ENCODE measurements at regions of chr12 and their contacts with region 1.

Region 1: GRCh38 chr12:47812797-47813510 is 6.7 kb downstream of the HDAC7 start:
- DNase-seq: peak; percentile 94
- ATAC-seq: peak; percentile 72
- H3K4me3 ChIP-seq: peak overlapping the region; percentile 53 to 68 (median 61)
- H3K4me3 Mint-ChIP-seq: peak overlapping the region; percentile 85
- H3K27ac ChIP-seq: peak overlapping the region; percentile 96 to 98
- H3K27ac Mint-ChIP-seq: peak overlapping the region; percentile 96
- H3K4me1 ChIP-seq: peaks cover 91 to 97% of the 10 kb centered on the region in 2 donors
- H3K4me1 Mint-ChIP-seq: peaks cover 94% of the 10 kb centered on the region
- H3K27me3 ChIP-seq: no peaks in the 10 kb centered on the region
- H3K27me3 Mint-ChIP-seq: no peaks in the 10 kb centered on the region
- CTCF ChIP-seq: no peak

Region 2: GRCh38 chr12:47356129-47356700 is 456.7 kb before region 1 on chr12:
- CTCF ChIA-PET with region 1: no interaction called
- POLR2A ChIA-PET with region 1: no interaction called
- intact Hi-C with region 1: loop called (anchors 5 kb)
- DNase-seq: peak; percentile 93
- ATAC-seq: peak; percentile 77
- H3K4me3 ChIP-seq: peak overlapping the region in 1 of 5 experiments; percentile 31
- H3K4me3 Mint-ChIP-seq: peak overlapping the region; percentile 74
- H3K27ac ChIP-seq: peak overlapping the region; percentile 91 to 95
- H3K27ac Mint-ChIP-seq: peak overlapping the region; percentile 98
- H3K4me1 ChIP-seq: peaks cover 71 to 80% of the 10 kb centered on the region in 2 donors
- H3K4me1 Mint-ChIP-seq: peaks cover 78% of the 10 kb centered on the region
- H3K27me3 ChIP-seq: no peaks in the 10 kb centered on the region
- H3K27me3 Mint-ChIP-seq: no peaks in the 10 kb centered on the region
- CTCF ChIP-seq: no peak

Region 3: DNA sequence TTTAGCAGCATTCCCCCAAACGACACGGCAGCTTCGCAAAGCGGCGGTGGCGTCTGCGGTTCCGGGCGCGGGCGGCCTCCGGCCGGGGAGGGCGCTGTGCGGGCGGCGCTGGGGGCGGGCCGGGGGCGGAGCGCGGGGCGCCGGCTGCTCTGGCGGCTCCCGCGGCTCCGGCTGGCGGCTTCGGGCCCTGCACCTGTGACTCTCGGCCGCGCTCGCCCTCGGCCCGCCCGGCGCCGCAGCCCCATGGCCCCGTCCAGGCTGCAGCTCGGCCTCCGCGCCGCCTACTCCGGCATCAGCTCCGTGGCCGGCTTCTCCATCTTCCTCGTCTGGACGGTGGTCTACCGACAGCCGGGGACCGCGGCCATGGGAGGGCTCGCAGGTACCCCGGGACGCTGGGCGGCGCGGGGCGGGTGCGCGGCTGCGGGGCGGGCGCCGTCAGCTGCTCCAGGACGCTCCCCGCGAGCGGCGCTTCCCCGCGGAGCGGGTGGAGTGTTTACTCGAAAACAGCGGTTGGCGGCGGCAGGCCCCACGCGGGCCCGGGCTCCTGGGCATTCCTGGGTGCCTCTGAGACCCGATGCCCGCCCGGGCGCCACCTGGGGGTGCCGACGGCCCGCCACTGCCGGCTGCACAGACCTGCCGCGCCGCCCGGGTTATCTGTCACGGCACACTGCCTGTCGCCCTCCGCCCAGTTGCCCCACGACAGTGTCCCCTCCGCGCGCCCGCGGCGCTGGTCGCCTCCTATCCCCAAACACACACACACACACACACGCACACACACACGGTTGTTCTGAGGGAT is 39.7 kb before region 1 on chr12 and contains the start of gene SLC48A1:
- CTCF ChIA-PET with region 1: interaction called, 30 read pairs
- POLR2A ChIA-PET with region 1: interaction called, 3 read pairs
- intact Hi-C with region 1: loop called (anchors 1 kb)
- DNase-seq: peak; percentile 88
- ATAC-seq: peak; percentile 92
- H3K4me3 ChIP-seq: peak within 1 kb of the TSS in 4 of 5 experiments; percentile 39 to 75 (median 62)
- H3K4me3 Mint-ChIP-seq: peak within 1 kb of the TSS; percentile 93
- H3K27ac ChIP-seq: peak within 1 kb of the TSS; percentile 53 to 54
- H3K27ac Mint-ChIP-seq: peak within 1 kb of the TSS; percentile 86
- H3K4me1 ChIP-seq: peaks cover 6 to 27% of the 10 kb centered on the region in 2 donors
- H3K4me1 Mint-ChIP-seq: peaks cover 24% of the 10 kb centered on the region
- H3K27me3 ChIP-seq: no peaks in the 10 kb centered on the region
- H3K27me3 Mint-ChIP-seq: no peaks in the 10 kb centered on the region
- CTCF ChIP-seq: peak; percentile 36
- total RNA-seq, gene SLC48A1: 20.0 and 25.1 TPM in 2 replicates

Region 4: GRCh38 chr12:47797441-47797840 is 15.5 kb before region 1 on chr12:
- CTCF ChIA-PET with region 1: interaction called, 76 read pairs
- POLR2A ChIA-PET with region 1: interaction called, 6 read pairs
- intact Hi-C with region 1: no loop called
- DNase-seq: peak; percentile 68
- ATAC-seq: peak; percentile 87
- H3K4me3 ChIP-seq: no peak overlapping the region
- H3K4me3 Mint-ChIP-seq: no peak overlapping the region
- H3K27ac ChIP-seq: no peak overlapping the region
- H3K27ac Mint-ChIP-seq: peak overlapping the region; percentile 84
- H3K4me1 ChIP-seq: peaks cover 12 to 26% of the 10 kb centered on the region in 2 donors
- H3K4me1 Mint-ChIP-seq: peaks cover 22% of the 10 kb centered on the region
- H3K27me3 ChIP-seq: no peaks in the 10 kb centered on the region
- H3K27me3 Mint-ChIP-seq: no peaks in the 10 kb centered on the region
- CTCF ChIP-seq: peak; percentile 38

Region 5: GRCh38 chr12:47848853-47849252 is 35.9 kb after region 1 on chr12:
- CTCF ChIA-PET with region 1: no interaction called
- POLR2A ChIA-PET with region 1: no interaction called
- intact Hi-C with region 1: no loop called
- DNase-seq: no peak
- ATAC-seq: no peak
- H3K4me3 ChIP-seq: no peak overlapping the region
- H3K4me3 Mint-ChIP-seq: no peak overlapping the region
- H3K27ac ChIP-seq: no peak overlapping the region
- H3K27ac Mint-ChIP-seq: no peak overlapping the region
- H3K4me1 ChIP-seq: no peaks in the 10 kb centered on the region
- H3K4me1 Mint-ChIP-seq: no peaks in the 10 kb centered on the region
- H3K27me3 ChIP-seq: peaks cover 0 to 6% (median 0%) of the 10 kb centered on the region in 4 experiments
- H3K27me3 Mint-ChIP-seq: no peaks in the 10 kb centered on the region
- CTCF ChIP-seq: no peak

Region 6: DNA sequence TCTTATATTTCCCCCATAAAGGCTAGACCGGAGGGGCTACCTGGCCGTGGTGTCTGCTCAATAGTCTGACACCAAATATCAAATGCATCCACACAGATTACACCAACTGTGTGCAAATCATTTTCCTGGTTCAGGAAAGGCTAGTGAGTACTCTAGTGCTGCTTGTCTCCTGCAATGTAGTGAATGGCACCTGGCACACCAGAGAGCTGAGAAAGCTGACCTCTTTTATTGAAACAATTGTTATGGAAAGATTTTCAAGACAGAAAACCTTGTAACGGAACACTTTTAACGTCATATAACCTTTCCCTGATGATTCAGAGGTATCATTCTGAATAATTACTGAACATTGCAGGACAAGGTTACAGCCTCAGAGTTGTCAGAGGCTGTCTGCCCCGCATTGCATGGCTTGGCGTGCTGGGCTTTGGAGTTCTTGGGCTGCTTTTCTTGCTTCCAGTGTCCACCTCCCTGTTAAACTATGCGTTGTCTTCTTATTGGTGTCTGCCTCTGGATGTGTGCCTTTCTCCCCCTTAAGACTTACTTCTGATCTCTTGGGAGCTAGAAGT is 47.4 kb after region 1 on chr12:
- CTCF ChIA-PET with region 1: no interaction called
- POLR2A ChIA-PET with region 1: no interaction called
- intact Hi-C with region 1: no loop called
- DNase-seq: no peak
- ATAC-seq: no peak
- H3K4me3 ChIP-seq: no peak overlapping the region
- H3K4me3 Mint-ChIP-seq: no peak overlapping the region
- H3K27ac ChIP-seq: no peak overlapping the region
- H3K27ac Mint-ChIP-seq: no peak overlapping the region
- H3K4me1 ChIP-seq: no peaks in the 10 kb centered on the region
- H3K4me1 Mint-ChIP-seq: no peaks in the 10 kb centered on the region
- H3K27me3 ChIP-seq: no peaks in the 10 kb centered on the region
- H3K27me3 Mint-ChIP-seq: no peaks in the 10 kb centered on the region
- CTCF ChIP-seq: no peak